PC-9 (cell line): ENCODE measurements at regions of chr12 and their contacts with region 1.

Region 1: GRCh38 chr12:93002293-93003054 is 73.4 kb upstream of the EEA1 start:
- DNase-seq: no peak
- H3K4me3 ChIP-seq: no peak overlapping the region
- H3K27ac ChIP-seq: no peak overlapping the region
- H3K4me1 ChIP-seq: no peaks in the 10 kb centered on the region
- H3K27me3 ChIP-seq: no peaks in the 10 kb centered on the region
- CTCF ChIP-seq: no peak

Region 2: GRCh38 chr12:93484315-93484981 is 482.0 kb after region 1 on chr12:
- CTCF ChIA-PET with region 1: no interaction called
- POLR2A ChIA-PET with region 1: no interaction called
- intact Hi-C with region 1: no loop called
- DNase-seq: peak in 1 of 2 experiments; percentile 5
- H3K4me3 ChIP-seq: no peak overlapping the region
- H3K27ac ChIP-seq: no peak overlapping the region
- H3K4me1 ChIP-seq: no peaks in the 10 kb centered on the region
- H3K27me3 ChIP-seq: no peaks in the 10 kb centered on the region
- CTCF ChIP-seq: no peak

Region 3: GRCh38 chr12:94803939-94804338 is 1801.5 kb after region 1 on chr12:
- CTCF ChIA-PET with region 1: interaction called, 10 read pairs
- POLR2A ChIA-PET with region 1: no interaction called
- intact Hi-C with region 1: no loop called
- DNase-seq: no peak
- H3K4me3 ChIP-seq: no peak overlapping the region
- H3K27ac ChIP-seq: no peak overlapping the region
- H3K4me1 ChIP-seq: no peaks in the 10 kb centered on the region
- H3K27me3 ChIP-seq: no peaks in the 10 kb centered on the region
- CTCF ChIP-seq: no peak